ENCODE measurements at regions of chr9 and their contacts with region 1.

Region 1: GRCh38 chr9:74773886-74774479 is 113.7 kb downstream of the TRPM6 start:
- DNase-seq: peak; percentile 78 to 86
- H3K4me3 ChIP-seq: no peak overlapping the region
- H3K27ac ChIP-seq: no peak overlapping the region
- H3K4me1 ChIP-seq: peaks cover 0 to 3% of the 10 kb centered on the region in 2 donors
- H3K27me3 ChIP-seq: no peaks in the 10 kb centered on the region
- CTCF ChIP-seq: peak; percentile 72 to 90 (median 74)
- POLR2A ChIP-seq: no peak

Region 2: GRCh38 chr9:74630228-74630627 is 143.8 kb before region 1 on chr9:
- intact Hi-C with region 1: no loop called
- DNase-seq: no peak
- H3K4me3 ChIP-seq: no peak overlapping the region
- H3K27ac ChIP-seq: no peak overlapping the region
- H3K4me1 ChIP-seq: no peaks in the 10 kb centered on the region
- H3K27me3 ChIP-seq: no peaks in the 10 kb centered on the region
- CTCF ChIP-seq: no peak
- POLR2A ChIP-seq: no peak

Region 3: DNA sequence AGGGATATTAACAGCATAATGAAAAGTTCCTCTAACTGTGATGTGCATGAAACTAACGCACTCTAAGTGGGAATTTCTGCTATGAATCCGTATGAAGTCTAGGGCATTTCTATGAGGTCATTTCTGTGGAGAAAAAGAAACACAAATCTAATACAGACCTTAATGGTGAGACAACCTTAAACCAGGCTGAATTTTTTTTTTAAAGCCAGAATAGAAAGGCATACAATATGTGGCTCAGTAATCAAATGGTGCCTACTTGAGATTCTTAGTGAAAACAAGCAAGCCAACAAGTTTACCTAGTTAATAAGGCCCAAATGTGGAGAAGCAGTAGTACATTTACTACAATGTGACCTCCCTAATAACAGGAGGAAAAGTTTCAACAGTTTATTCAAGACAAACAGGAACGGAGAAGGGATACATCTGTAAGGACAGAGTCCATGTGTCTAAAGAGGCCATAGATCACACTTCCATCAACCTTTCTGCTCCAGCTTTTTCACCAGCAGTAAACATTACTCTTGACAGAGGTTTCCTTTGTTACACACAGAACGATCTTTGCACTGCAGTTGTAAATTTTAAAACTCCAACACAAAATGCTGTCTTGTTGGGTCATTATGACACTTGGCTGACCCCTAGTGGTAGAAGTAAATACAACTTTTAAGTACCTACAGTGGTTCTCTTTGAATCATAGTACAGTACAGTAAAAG is 227.9 kb after region 1 on chr9:
- intact Hi-C with region 1: loop called (anchors 2 kb)
- DNase-seq: no peak
- H3K4me3 ChIP-seq: no peak overlapping the region
- H3K27ac ChIP-seq: no peak overlapping the region
- H3K4me1 ChIP-seq: peaks cover 4% of the 10 kb centered on the region in 2 donors
- H3K27me3 ChIP-seq: no peaks in the 10 kb centered on the region
- CTCF ChIP-seq: peak; percentile 45 to 87 (median 70)
- POLR2A ChIP-seq: no peak

Region 4: GRCh38 chr9:75071530-75072124 is 297.6 kb after region 1 on chr9:
- intact Hi-C with region 1: loop called (anchors 5 kb)
- DNase-seq: peak; percentile 28 to 35
- H3K4me3 ChIP-seq: no peak overlapping the region
- H3K27ac ChIP-seq: no peak overlapping the region
- H3K4me1 ChIP-seq: peaks cover 0 to 6% of the 10 kb centered on the region in 2 donors
- H3K27me3 ChIP-seq: no peaks in the 10 kb centered on the region
- CTCF ChIP-seq: no peak
- POLR2A ChIP-seq: no peak